AG04449 (cell line): ENCODE measurements at regions of chr19 and their contacts with region 1.

Region 1: GRCh38 chr19:3471954-3472655 is 8.2 kb downstream of the SMIM24 start:
- DNase-seq: no peak
- H3K4me3 ChIP-seq: no peak overlapping the region
- CTCF ChIP-seq: peak; percentile 85

Region 2: GRCh38 chr19:3304871-3305423 is 167.2 kb before region 1 on chr19:
- CTCF ChIA-PET with region 1: interaction called, 89 read pairs
- POLR2A ChIA-PET with region 1: no interaction called
- DNase-seq: no peak
- H3K4me3 ChIP-seq: no peak overlapping the region
- CTCF ChIP-seq: peak; percentile 70

Region 3: GRCh38 chr19:3324321-3324856 is 147.7 kb before region 1 on chr19:
- CTCF ChIA-PET with region 1: interaction called, 117 read pairs
- POLR2A ChIA-PET with region 1: no interaction called
- DNase-seq: no peak
- H3K4me3 ChIP-seq: no peak overlapping the region
- CTCF ChIP-seq: peak; percentile 78

Region 4: DNA sequence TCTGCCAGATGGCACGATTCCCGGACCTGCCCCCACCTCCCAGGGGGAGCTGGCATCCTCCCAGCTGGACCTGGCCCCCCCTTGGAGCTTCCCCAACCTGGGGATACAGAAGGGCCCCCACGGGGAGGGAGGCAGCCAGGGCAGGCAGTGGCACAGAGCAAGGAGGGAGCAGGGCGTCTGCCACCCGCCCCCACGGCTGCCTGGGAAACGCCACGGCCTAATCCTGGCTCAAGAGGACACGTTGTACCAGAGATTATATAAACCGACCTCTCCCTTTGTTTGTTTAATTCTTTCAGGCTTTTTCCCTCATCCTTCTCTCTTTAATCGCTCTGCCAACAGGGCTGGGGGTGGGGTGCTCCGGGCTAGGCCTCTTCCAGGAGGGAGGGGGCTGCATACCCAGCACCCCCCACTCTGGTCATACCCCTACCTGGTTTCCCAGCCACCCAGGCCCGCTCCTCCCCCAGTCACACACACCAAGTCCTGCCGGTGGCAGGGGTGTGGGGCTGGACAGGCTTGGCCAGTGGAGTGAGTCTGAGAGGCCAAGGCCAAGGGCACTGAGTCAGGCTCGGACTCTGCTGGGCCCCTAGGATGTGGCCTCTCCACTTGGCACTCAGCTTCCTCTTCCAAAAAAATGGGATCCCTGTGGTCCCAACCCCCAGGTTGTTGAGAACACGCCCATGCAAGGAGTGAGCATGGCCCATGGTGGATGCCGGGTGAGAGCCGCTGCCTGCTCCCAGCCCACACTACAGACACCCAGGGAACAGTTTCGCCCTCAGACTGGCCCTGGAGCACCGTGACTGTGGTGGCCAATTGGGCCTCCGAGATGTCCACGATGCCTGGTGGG is 135.2 kb before region 1 on chr19:
- CTCF ChIA-PET with region 1: interaction called, 29 read pairs
- POLR2A ChIA-PET with region 1: no interaction called
- DNase-seq: no peak
- H3K4me3 ChIP-seq: no peak overlapping the region
- CTCF ChIP-seq: no peak

Region 5: DNA sequence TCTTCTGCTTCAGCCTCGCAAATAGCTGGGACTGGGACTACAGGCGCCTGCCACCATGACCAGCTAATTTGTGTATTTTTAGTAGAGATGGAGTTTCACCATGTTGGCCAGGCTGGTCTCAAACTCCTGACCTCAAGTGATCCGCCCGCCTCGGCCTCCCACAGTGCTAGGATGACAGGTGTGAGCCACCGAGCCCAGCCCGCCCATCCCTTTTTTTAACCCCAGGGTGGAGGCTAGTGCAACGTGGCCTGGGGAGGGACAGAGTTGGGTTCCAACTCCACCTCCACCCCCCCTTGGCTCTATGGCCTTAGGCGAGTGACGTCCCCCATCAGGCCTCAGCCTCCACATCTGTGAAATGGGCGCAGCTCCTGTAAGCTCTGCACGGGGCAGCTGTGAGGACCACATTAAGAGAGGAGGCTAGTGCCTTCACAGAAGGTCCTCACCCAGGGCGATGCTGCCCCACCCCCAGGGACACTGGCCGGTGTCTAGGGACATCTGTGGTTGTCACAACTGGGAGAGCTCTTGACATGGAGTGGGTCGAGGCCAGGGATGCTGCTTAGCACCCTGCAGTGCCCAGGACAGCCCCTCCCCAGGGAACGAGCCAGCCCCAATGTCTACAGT is 29.5 kb before region 1 on chr19:
- CTCF ChIA-PET with region 1: interaction called, 12 read pairs
- POLR2A ChIA-PET with region 1: no interaction called
- DNase-seq: no peak
- H3K4me3 ChIP-seq: no peak overlapping the region
- CTCF ChIP-seq: no peak

Region 6: DNA sequence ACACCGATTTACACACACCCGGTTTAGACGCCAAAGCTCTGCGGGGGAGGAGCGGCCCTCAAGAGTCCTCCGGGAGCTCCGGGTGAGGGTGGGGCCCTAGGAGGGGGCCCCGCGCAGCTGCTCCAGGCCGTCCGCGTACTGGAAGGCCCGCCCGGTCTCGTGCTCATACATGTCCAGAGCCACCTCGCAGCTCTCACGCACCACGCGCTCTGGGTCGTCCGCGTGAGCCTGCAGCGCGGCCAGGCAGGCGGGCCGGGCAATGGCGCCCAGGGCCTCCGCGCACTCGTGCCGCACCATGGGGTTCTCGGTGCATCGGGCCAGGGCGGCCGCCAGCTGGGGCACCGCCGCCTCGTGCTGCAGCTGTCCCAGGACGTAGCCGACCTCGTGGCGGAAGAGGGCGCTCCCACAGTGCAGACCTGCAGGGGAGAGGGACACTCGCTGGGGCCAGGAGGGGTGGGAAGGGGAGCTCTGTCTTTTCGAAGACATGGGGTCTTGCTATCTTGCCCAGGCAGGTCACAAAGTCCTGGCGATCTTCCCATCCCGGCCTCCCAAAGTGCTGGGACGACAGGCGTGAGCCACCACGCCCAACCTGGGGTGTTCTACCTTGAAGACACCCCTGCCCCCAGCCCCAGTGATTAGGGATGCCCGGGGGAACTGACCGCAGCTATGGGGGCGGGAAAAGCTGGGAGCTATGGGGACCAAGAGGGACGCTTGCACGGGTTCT is 19.5 kb after region 1 on chr19:
- CTCF ChIA-PET with region 1: interaction called, 72 read pairs
- POLR2A ChIA-PET with region 1: no interaction called
- DNase-seq: no peak
- H3K4me3 ChIP-seq: no peak overlapping the region
- CTCF ChIP-seq: no peak

Region 7: DNA sequence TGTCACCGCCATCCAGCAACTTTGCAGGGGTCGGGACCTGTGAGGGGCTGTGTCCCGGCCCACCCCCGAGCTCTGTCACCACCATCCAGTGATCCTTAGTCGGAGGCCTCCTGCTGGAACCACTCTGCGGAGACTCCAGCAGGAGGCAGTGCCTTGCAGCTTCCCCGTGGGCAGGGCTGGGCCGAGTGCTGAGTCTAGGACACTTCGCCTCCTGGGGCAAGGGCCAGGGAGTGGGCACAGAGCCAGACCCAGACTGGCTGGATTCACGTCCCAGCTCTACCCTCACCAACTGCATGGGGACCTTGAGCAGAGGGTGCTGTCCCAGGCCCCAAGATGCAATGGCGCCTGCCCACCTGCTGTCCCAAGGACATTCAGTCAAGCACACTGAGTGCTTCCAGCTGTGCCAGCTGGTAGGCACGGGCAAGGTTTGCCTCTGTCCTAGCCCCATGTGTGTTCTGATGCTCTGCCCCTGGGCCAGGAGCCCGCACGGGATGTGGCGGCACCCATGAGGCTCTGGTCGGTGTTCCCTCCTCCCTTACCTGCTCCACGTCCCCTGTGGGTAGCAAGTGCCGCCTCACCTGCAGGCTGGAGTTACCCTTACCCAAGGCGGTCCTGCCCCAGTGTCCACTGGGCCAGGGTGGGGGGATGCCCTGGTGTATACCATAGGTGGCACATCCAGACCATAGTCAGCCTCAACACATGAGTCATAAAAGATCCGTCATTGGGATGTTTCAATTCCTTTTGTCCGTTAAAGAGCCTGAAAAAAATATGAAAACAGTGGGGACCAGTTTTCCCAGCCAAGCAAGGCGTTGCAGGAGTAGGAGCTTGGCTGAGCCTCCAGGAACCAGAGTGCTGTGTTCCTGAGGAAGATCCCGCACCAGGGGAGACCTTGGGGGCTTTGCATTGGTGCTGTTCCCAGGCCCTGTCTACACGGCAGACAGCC is 41.4 kb after region 1 on chr19:
- CTCF ChIA-PET with region 1: no interaction called
- POLR2A ChIA-PET with region 1: no interaction called
- DNase-seq: no peak
- H3K4me3 ChIP-seq: no peak overlapping the region
- CTCF ChIP-seq: no peak

Region 8: GRCh38 chr19:3565139-3565538 is 93.0 kb after region 1 on chr19:
- CTCF ChIA-PET with region 1: no interaction called
- POLR2A ChIA-PET with region 1: no interaction called
- DNase-seq: no peak
- H3K4me3 ChIP-seq: no peak overlapping the region
- CTCF ChIP-seq: no peak